Right ventricle myocardium superior (tissue), 1 donor: ENCODE measurements at regions of chr10 and their contacts with region 1.

Region 1: DNA sequence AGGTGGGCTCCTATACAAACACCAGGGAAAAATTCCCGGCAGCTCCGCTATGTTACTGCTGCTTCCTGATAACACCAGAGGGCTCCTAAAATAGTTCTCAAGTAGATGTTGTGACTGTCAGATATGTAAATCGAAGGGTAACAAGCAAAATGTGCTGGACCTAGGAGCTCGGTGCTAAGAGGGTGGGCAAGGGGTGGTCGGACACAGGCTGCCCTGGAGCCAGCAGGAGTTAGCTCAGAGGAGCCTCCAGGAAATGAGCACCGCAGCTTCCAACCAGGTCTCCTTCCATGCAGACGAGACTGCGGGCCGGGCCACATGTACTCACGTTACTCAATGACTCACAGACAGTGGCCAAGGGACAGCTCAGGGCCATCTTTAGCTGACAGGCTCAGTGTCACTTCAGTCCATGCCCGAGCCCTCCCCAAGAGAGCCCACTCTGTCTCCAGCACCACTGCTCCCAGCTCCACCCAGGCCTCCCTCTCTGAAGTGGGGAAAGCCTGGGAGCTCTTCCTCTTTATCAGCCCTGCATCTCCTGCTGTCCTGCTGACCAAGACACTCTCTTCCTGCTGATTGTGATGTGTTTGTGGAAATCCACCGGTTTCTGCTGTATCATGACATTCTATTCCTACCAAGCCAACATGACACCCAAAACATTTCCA is 37.2 kb upstream of the TMEM273 start:
- DNase-seq: peak; percentile 47
- ATAC-seq: peak; percentile 80

Region 2: DNA sequence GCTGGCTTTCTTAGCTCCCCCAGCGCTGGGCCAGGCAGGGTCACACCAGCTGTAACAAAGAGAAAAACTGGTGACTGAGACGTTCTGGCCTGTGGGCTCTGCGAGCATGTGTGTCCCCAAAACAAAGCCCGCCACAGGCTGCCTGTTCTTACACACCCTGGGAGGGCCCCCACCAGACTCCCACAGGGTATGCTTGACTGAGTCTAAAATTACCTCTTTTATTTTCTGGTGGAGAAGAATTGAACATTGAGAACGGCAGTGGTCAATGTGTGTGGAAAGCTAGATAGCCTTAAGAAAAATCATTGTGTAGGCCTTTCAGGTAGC is 74.4 kb after region 1 on chr10:
- intact Hi-C with region 1: loop called (anchors 5 kb)
- DNase-seq: no peak
- ATAC-seq: peak; percentile 1

Region 3: DNA sequence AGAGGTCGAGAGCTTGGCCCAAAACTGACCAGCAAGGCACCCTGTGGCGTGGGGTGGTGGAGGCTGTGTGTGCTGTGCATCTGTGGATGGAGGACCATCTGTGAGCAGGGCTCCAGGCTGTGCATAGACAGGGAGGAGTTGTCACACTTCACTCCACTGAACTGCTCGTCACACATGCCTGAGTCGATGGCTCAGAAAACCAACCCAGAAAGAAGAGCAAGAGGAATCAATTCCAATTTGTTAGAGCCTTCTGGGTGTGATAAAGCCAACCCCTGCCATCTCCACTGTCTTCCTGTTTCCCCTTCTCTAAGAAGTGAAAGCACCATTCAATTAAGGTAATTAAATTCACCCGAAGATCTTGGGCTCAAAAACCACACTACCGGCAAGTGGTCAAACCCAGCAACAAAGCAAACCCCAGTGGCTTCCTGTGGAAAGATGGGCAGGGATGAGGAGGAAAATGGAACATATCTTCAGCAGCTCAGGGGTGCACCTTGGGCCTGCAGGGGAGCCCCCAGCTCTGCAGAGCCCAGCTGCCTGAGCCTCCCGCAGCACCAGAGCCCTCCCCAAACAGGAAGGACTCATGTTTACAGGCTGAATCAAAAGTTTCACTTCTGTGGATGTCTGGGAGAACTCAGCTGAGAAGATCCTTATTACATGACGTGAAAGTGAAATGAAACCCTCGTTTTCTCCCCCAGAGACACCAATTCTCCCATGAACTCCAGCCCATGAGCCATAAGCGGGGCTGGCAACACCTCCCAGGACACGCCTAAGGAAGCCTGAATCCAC is 84.5 kb after region 1 on chr10:
- intact Hi-C with region 1: no loop called
- DNase-seq: no peak
- ATAC-seq: no peak